ENCODE measurements at regions of chr11 and their contacts with region 1.

Region 1: GRCh38 chr11:57345555-57346211 is 7.5 kb downstream of the P2RX3 start:
- DNase-seq: peak; percentile 59 to 74 (median 63)
- H3K4me3 ChIP-seq: no peak overlapping the region
- H3K4me3 Mint-ChIP-seq: no peak overlapping the region
- H3K27ac ChIP-seq: no peak overlapping the region
- H3K27ac Mint-ChIP-seq: no peak overlapping the region
- H3K4me1 ChIP-seq: peaks cover 4% of the 10 kb centered on the region
- H3K4me1 Mint-ChIP-seq: peaks cover 0 to 5% (median 3%) of the 10 kb centered on the region in 4 donors
- H3K27me3 ChIP-seq: no peaks in the 10 kb centered on the region
- H3K27me3 Mint-ChIP-seq: peaks cover 2% of the 10 kb centered on the region in 2 donors

Region 2: GRCh38 chr11:57335343-57336110 is 10.2 kb before region 1 on chr11 and contains the start of gene SSRP1:
- CTCF ChIA-PET with region 1: interaction called, 33 read pairs
- POLR2A ChIA-PET with region 1: interaction called, 4 read pairs
- intact Hi-C with region 1: no loop called
- DNase-seq: peak; percentile 87 to 92 (median 88)
- H3K4me3 ChIP-seq: peak within 1 kb of the TSS; percentile 55 to 87
- H3K4me3 Mint-ChIP-seq: peak within 1 kb of the TSS; percentile 86 to 98 (median 94)
- H3K27ac ChIP-seq: peak within 1 kb of the TSS; percentile 85
- H3K27ac Mint-ChIP-seq: peak within 1 kb of the TSS; percentile 96 to 99 (median 98)
- H3K4me1 ChIP-seq: peaks cover 25% of the 10 kb centered on the region
- H3K4me1 Mint-ChIP-seq: peaks cover 23 to 29% (median 25%) of the 10 kb centered on the region in 4 donors
- H3K27me3 ChIP-seq: no peaks in the 10 kb centered on the region
- H3K27me3 Mint-ChIP-seq: no peaks in the 10 kb centered on the region
- total RNA-seq, gene SSRP1: 69.0 to 74.3 TPM

Region 3: DNA sequence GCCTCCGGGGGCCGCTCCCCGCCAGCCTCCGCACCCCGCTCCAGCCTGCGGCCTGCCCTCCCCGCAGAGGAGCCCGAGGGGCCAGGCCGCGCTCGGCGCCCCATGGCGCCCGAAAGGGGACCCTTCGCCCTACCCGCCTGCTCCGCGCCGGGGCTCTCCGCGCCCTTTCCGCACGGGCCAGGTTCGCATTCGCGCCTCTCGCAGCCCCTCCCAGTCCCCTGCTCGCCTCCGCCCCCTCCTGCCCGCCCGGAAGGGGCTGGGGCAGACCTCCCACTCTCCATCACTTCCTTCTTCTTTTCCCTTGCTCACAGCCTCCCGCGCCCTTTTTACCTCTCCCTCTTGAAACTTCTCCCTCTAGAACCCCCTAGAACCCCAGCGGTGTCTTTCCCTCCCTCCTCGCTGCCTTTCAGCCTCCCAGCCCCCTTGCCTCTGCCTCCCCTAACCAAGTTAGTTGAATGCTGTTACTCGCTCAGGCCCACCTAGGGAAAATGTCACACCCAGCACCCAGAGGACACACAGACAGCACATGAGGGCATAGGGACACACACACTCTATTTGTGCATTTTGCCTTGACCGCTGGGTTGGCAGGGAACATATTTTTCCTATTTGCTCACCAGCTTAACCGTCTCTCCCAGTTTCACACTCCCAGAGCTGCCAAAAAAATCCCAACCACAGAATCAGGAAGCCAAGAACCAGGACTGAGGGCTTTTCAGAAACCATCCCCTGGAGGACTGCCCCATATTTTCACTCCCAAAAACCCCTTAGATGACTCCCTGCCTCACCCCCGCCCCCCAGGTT is 81.4 kb after region 1 on chr11 and contains the start of gene SLC43A3:
- CTCF ChIA-PET with region 1: interaction called, 5 read pairs
- POLR2A ChIA-PET with region 1: no interaction called
- intact Hi-C with region 1: loop called (anchors 5 kb)
- DNase-seq: peak; percentile 36 to 62 (median 37)
- H3K4me3 ChIP-seq: peak within 1 kb of the TSS; percentile 32 to 58
- H3K4me3 Mint-ChIP-seq: peak within 1 kb of the TSS; percentile 83 to 93 (median 88)
- H3K27ac ChIP-seq: peak within 1 kb of the TSS; percentile 45
- H3K27ac Mint-ChIP-seq: peak within 1 kb of the TSS; percentile 78 to 94 (median 90)
- H3K4me1 ChIP-seq: peaks cover 34% of the 10 kb centered on the region
- H3K4me1 Mint-ChIP-seq: peaks cover 33 to 56% (median 40%) of the 10 kb centered on the region in 4 donors
- H3K27me3 ChIP-seq: no peaks in the 10 kb centered on the region
- H3K27me3 Mint-ChIP-seq: no peaks in the 10 kb centered on the region
- total RNA-seq, gene SLC43A3: 15.1 to 15.6 TPM

Region 4: GRCh38 chr11:57444362-57445121 is 98.9 kb after region 1 on chr11:
- CTCF ChIA-PET with region 1: no interaction called
- POLR2A ChIA-PET with region 1: no interaction called
- intact Hi-C with region 1: no loop called
- DNase-seq: no peak
- H3K4me3 ChIP-seq: no peak overlapping the region
- H3K4me3 Mint-ChIP-seq: no peak overlapping the region
- H3K27ac ChIP-seq: no peak overlapping the region
- H3K27ac Mint-ChIP-seq: no peak overlapping the region
- H3K4me1 ChIP-seq: no peaks in the 10 kb centered on the region
- H3K4me1 Mint-ChIP-seq: peaks cover 0 to 1% (median 0%) of the 10 kb centered on the region in 4 donors
- H3K27me3 ChIP-seq: no peaks in the 10 kb centered on the region
- H3K27me3 Mint-ChIP-seq: peaks cover 5 to 9% of the 10 kb centered on the region in 2 donors

Region 5: GRCh38 chr11:57493507-57494503 is 148.1 kb after region 1 on chr11:
- CTCF ChIA-PET with region 1: interaction called, 22 read pairs
- POLR2A ChIA-PET with region 1: interaction called, 3 read pairs
- intact Hi-C with region 1: no loop called
- DNase-seq: peak; percentile 64 to 74 (median 67)
- H3K4me3 ChIP-seq: no peak overlapping the region
- H3K4me3 Mint-ChIP-seq: no peak overlapping the region
- H3K27ac ChIP-seq: no peak overlapping the region
- H3K27ac Mint-ChIP-seq: no peak overlapping the region
- H3K4me1 ChIP-seq: no peaks in the 10 kb centered on the region
- H3K4me1 Mint-ChIP-seq: no peaks in the 10 kb centered on the region
- H3K27me3 ChIP-seq: no peaks in the 10 kb centered on the region
- H3K27me3 Mint-ChIP-seq: no peaks in the 10 kb centered on the region

Region 6: DNA sequence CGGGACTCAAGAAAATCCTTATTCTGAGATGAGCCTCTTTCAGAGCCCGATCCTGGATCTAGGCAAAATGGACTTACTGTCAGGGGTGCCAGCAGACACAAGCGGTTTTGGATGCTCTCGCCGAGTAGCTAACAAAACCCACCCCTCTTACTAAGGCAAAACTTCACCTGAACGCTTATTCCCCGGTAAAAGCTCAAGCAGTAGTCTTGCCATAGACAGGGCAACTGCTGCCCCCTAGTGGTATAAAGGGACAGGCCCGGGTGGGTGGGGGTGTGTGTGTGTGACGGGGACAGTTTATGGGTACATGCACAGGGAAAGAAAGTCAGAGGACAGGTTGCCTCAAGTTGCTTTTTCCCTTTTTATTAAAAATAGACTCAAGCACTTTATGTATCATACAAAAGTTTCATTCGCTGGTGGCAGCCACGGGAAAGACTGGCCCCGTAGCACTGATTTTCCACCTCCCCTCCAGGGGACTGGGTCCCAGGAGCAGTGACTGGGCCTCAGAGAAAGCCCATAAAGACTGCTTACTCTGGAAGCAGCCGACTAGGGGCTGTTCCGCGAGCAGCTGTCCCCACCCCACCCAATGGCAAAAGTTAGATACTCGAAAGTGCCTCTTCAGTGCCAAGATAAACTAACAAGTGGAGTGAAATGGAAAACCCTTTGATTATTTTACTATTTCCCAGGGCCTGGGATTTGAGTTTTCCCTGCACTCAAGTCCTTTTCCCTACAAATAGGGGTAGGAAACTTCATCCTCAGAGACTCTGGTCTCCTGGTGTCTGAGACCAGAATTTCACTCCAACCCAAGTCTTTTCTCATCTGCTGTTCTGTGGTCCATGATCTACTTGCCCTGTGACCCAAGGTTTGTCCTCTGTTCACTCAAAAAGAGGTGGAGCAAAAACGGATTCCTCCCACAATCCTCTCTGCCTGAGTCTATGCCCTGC is 299.3 kb after region 1 on chr11:
- CTCF ChIA-PET with region 1: interaction called, 32 read pairs
- POLR2A ChIA-PET with region 1: no interaction called
- intact Hi-C with region 1: loop called (anchors 1 kb)
- DNase-seq: peak; percentile 82 to 89 (median 86)
- H3K4me3 ChIP-seq: no peak overlapping the region
- H3K4me3 Mint-ChIP-seq: peak overlapping the region in 1 of 8 donors; percentile 67
- H3K27ac ChIP-seq: no peak overlapping the region
- H3K27ac Mint-ChIP-seq: peak overlapping the region in 2 of 7 donors; percentile 62 to 69
- H3K4me1 ChIP-seq: peaks cover 17% of the 10 kb centered on the region
- H3K4me1 Mint-ChIP-seq: peaks cover 18 to 38% (median 28%) of the 10 kb centered on the region in 4 donors
- H3K27me3 ChIP-seq: peaks cover 37% of the 10 kb centered on the region
- H3K27me3 Mint-ChIP-seq: peaks cover 31 to 50% of the 10 kb centered on the region in 2 donors

Region 7: GRCh38 chr11:58675334-58676155 is 1329.9 kb after region 1 on chr11:
- CTCF ChIA-PET with region 1: interaction called, 4 read pairs
- POLR2A ChIA-PET with region 1: no interaction called
- intact Hi-C with region 1: loop called (anchors 10 kb)
- DNase-seq: peak; percentile 46 to 64 (median 58)
- H3K4me3 ChIP-seq: no peak overlapping the region
- H3K4me3 Mint-ChIP-seq: no peak overlapping the region
- H3K27ac ChIP-seq: no peak overlapping the region
- H3K27ac Mint-ChIP-seq: no peak overlapping the region
- H3K4me1 ChIP-seq: no peaks in the 10 kb centered on the region
- H3K4me1 Mint-ChIP-seq: no peaks in the 10 kb centered on the region
- H3K27me3 ChIP-seq: peaks cover 5% of the 10 kb centered on the region
- H3K27me3 Mint-ChIP-seq: peaks cover 0 to 4% of the 10 kb centered on the region in 2 donors

Measured in CD4-positive, alpha-beta memory T cell (primary cell).